ENCODE measurements at regions of chr12 and their contacts with region 1.

Region 1: DNA sequence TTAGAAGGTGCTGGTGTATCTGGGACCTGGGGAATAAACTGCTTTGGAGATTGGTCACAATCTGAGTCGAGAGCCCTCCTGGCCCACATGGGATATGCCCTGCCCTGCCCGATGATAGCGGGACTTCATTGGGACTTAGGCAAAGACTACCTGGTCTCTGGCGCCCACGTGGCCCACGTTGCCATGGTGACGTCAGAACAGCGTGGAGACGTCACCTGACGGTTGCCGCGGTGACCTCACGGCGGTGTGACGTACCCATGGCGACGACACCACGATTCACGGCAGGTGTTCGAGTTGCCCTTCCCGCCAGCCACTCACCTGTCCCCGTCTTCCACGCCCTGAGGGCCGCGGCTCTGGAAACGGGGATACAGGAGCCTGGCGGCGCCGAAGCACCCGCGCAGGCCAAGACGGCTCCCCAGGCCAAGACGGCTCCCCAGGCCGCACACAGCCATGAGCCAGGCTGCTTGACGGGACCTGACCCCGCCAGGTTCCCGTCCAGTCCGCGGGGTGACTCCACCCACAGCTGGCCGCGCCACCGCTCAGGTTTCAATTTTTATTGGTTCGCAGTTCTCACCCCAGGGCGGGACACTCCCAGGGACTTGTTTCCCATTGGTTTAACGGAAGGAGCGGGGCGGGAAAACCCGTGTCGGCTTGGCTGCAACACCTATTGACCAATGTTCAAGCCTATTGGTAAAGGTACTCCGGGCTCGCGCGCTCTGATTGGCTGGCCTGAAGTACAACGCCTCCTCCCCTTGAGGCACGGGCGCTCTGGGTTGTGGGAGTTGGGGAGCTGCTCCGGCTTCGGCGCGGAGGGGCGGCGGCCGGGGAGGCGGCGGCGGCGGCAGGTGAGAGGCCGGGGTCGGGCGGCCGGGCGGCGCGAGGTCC is at the starts of genes MMAB and MVK:
- DNase-seq: peak; percentile 99 to 100 (median 99)
- ATAC-seq: peak; percentile 98 to 99
- H3K4me3 ChIP-seq: peak within 1 kb of the TSS; percentile 94
- H3K27ac ChIP-seq: peak within 1 kb of the TSS; percentile 56
- H3K4me1 ChIP-seq: peaks cover 4% of the 10 kb centered on the region
- H3K27me3 ChIP-seq: no peaks in the 10 kb centered on the region
- total RNA-seq, gene MMAB: 37.0 to 50.7 (median 42.2) TPM
- total RNA-seq, gene MVK: 5.8 to 10.2 (median 6.9) TPM

Region 2: GRCh38 chr12:109385339-109386067 is 187.8 kb before region 1 on chr12:
- intact Hi-C with region 1: no loop called
- DNase-seq: peak in 2 of 3 donors; percentile 30 to 58
- ATAC-seq: peak; percentile 75 to 80
- H3K4me3 ChIP-seq: no peak overlapping the region
- H3K27ac ChIP-seq: no peak overlapping the region
- H3K4me1 ChIP-seq: no peaks in the 10 kb centered on the region
- H3K27me3 ChIP-seq: no peaks in the 10 kb centered on the region

Region 3: DNA sequence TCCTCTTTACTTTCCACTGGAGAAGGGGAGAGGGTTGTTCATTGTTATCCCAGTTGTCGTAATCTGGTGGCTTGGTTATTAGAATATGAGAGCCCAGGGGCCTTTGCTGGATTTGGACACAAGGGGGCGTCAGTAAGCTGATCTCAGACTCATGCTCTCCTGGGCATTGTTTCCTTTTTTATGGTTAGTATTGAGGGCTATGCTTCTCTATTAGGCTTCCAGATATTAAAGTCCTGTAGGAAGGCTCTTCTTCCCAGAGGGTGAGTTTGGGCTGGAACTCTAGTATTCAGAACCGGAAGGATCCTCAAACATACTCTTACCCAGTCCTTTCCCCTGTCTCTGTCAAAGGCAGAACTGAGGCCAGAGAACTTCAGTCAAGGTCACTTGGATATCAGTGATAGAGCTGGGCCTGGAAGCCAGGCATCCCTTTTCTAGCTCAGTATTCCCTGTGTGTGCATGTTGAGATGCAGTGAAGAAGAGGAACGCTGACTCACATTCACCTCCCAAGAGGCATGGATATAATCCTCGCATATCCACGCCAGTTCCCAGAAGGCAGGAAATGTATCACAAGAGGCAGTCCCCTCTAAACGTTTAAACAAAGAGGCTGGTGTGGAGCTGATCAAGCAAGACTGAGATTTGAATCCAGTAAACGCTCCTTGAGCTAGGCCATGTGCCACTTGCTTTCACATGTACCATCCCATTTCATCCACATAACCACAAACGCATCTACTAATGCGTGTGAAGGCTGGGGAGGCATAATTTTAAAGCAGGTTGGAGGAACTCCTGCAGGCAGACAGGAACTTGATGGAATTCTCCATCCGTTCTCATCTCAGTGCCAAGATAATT is 54.2 kb before region 1 on chr12:
- intact Hi-C with region 1: loop called in 1 of 4 experiments (anchors 10 kb)
- DNase-seq: peak; percentile 62 to 88 (median 76)
- ATAC-seq: peak; percentile 64 to 86
- H3K4me3 ChIP-seq: no peak overlapping the region
- H3K27ac ChIP-seq: peak overlapping the region; percentile 87
- H3K4me1 ChIP-seq: peaks cover 4% of the 10 kb centered on the region
- H3K27me3 ChIP-seq: no peaks in the 10 kb centered on the region

Measured in right cardiac atrium (tissue), 5 donors.